PC-9 (cell line): ENCODE measurements at regions of chr7 and their contacts with region 1.

Region 1: GRCh38 chr7:98034081-98035035 is 44.4 kb upstream of the OCM2 start:
- DNase-seq: no peak
- H3K4me3 ChIP-seq: no peak overlapping the region
- H3K27ac ChIP-seq: no peak overlapping the region
- H3K4me1 ChIP-seq: no peaks in the 10 kb centered on the region
- H3K27me3 ChIP-seq: no peaks in the 10 kb centered on the region
- CTCF ChIP-seq: no peak

Region 2: DNA sequence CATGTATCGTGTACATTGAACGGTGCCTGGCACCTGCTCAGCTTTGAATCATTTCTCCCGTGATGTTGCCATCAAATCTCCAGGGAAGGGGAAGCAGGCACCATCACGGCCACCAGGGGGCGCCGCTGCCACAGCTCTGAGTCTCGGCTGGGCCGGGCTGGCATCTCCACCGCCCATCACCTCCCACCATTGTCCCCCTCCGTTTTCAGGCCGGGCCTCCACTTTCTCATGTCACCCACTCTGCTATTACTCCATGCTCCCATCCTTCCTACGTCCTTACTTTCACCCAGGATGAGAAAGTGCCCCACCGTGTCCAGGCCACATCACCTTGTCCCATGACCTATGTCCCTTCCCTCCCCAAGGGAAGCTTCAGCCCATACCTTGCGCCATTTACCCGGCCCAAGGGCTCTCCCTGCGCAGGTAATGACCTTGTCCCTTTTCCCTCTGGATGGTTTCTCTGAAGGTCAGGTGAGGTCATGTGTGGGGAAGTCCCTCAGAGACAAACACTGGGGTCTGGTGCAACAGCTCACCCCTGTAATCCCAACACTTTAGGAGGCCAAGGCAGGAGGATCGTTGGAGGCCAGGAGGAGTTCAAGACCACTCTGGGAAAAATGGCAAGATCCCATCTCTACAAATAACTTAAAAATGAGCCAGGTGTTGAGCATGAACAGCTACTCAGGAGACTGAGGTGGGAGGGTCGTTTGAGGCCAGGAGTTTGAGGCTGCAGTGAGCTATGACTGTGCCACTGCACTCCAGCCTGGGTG is 12.6 kb before region 1 on chr7:
- CTCF ChIA-PET with region 1: interaction called, 19 read pairs
- POLR2A ChIA-PET with region 1: no interaction called
- intact Hi-C with region 1: no loop called
- DNase-seq: peak; percentile 55 to 85
- H3K4me3 ChIP-seq: no peak overlapping the region
- H3K27ac ChIP-seq: no peak overlapping the region
- H3K4me1 ChIP-seq: no peaks in the 10 kb centered on the region
- H3K27me3 ChIP-seq: no peaks in the 10 kb centered on the region
- CTCF ChIP-seq: peak; percentile 94

Region 3: GRCh38 chr7:98056580-98056979 is 22.2 kb after region 1 on chr7:
- CTCF ChIA-PET with region 1: no interaction called
- POLR2A ChIA-PET with region 1: no interaction called
- intact Hi-C with region 1: no loop called
- DNase-seq: no peak
- H3K4me3 ChIP-seq: no peak overlapping the region
- H3K27ac ChIP-seq: no peak overlapping the region
- H3K4me1 ChIP-seq: peaks cover 13% of the 10 kb centered on the region
- H3K27me3 ChIP-seq: no peaks in the 10 kb centered on the region
- CTCF ChIP-seq: no peak